Right ventricle myocardium superior (tissue), 1 donor: ENCODE measurements at regions of chr1 and their contacts with region 1.

Region 1: GRCh38 chr1:53278201-53278725 is 39.9 kb upstream of the MAGOH start:
- DNase-seq: peak; percentile 68
- ATAC-seq: peak; percentile 64

Region 2: DNA sequence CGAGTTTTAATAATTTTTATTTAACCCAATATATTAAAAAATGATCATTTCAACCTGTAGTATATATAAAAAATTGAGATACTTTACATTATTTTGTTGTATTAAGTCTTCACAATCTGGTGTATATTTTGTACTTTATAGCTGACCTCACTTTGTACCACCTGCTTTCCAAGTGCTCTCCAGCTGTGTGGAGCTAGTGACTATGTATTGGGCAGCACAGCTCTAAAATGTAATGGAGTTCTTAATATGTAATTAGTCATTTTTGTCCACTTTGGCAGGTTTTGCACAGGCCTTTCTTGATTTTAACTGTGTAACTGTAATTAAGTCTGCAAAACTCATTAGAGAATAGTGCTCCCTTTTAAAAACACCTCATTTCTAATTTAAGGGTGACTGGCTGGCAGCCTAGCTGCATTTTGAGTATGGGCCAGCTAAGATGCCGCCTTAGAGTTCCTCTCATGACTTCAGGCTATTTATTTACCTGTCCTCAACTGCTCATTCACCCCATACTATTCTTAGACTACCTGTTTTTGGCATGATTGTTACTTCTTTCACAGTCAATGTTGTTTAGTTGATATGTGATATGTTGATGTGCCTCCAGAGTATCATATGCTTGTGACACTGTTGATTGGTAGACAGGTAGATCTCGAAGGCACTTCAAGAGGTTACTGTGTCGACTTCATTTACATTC is 508.8 kb before region 1 on chr1:
- intact Hi-C with region 1: no loop called
- DNase-seq: no peak
- ATAC-seq: peak; percentile 75

Region 3: DNA sequence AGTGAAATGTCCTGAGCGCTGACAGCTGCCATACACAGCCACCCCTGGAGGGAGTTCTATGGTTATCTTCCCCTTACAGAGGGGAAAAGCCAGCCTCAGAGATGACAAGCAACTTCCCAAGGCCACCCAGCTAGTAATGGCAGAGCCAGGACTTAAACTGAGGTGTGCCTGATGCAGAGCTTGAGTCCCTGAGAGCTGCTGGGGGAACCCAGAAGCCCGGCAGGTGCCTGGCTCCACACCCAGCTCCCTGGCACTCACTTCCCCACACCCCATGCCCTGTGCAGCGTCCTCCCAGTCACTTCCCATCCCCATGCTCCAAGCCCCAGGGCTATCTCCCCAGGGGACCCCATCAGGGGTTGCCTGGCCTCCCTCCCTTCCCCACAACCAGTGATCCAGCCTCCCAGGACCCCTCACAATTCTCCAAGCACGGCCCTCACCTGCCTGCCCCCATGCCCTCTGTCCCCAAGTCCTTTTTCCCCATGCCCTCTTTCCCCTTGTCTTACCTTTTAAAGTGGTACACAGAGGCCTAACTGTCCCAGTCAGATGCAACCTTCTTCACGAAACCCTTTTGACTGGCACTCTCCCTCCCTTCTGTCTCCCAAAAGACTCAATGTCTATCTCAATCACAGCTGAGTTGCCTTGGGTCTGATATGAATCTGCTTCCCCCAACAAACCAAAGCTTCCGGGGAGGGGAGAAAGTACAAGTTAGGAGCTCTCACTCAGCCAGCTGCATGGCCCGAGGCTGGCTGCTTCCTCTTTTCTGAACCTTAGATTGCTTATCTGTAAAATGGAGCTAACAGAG is 89.4 kb after region 1 on chr1:
- intact Hi-C with region 1: no loop called
- DNase-seq: no peak
- ATAC-seq: peak; percentile 72

Region 4: DNA sequence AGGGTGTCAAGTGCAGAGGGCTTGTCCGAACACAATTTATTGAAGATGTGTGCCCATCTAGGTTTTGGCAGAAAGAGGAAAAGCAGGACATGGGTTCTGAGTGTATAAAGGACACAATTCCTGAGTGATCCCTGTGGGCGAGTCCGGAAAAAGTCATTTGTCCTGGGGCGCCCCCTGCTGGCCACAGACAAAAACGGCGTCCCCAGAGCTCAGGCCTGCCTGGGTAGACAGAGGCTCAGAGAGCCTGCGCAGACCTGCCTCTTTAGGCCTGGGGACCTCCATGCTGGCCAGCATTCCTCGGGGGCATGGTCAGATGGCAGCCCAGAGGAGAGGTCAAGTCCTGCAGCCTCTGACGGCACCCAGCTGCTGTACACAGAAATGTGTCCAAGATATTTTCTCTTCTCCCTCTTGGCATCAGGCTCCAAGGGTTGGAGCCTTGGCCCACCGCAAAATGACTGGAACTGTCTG is 115.1 kb after region 1 on chr1:
- intact Hi-C with region 1: loop called (anchors 1 kb)
- DNase-seq: peak; percentile 82
- ATAC-seq: peak; percentile 91